Left lung (tissue), 14 donors: ENCODE measurements at regions of chr6 and their contacts with region 1.

Region 1: GRCh38 chr6:168884646-168885086 is 369.0 kb downstream of the THBS2 start:
- DNase-seq: peak; percentile 57 to 90 (median 70)
- ATAC-seq: peak; percentile 98
- H3K4me3 ChIP-seq: no peak overlapping the region
- H3K27ac ChIP-seq: no peak overlapping the region
- H3K4me1 ChIP-seq: no peaks in the 10 kb centered on the region
- H3K27me3 ChIP-seq: peaks cover 0 to 57% of the 10 kb centered on the region in 2 donors
- CTCF ChIP-seq: peak; percentile 89 to 91

Region 2: DNA sequence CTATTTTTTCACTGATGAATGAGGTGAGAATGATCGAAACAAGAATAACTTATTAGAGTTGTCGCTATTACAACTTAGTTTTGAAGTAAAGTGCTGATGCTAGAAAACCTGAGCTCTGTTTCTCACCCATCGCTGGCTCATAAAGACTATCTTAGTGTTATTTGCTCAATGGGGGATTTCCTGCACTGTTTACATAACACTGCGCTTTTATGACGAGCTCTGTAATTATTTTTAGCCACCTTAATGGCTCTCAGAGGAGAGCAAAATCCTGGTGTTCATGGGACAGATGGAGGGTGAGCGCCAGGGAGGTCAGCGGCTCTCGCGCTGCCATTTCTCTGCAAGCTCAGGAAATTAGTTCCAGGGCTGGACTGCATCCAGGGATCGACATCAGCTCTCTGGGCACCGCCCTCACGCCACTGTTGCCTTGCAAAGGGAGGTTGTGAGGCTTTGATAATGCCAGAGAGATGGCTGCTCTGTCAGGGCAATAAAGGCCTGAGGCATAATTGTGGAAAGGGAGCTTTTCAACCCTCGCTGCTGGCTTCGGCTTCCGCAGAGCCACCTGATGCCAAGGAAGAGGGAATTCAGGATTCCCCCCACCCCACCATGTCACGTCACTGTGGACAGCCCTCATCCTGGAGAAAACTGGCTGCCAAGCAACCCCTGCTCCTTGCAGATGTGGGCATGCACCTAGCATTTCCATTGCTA is 637.1 kb before region 1 on chr6:
- intact Hi-C with region 1: no loop called
- DNase-seq: peak in 1 of 4 donors; percentile 74
- ATAC-seq: peak; percentile 85
- H3K4me3 ChIP-seq: no peak overlapping the region
- H3K27ac ChIP-seq: no peak overlapping the region
- H3K4me1 ChIP-seq: peaks cover 0 to 6% of the 10 kb centered on the region in 2 donors
- H3K27me3 ChIP-seq: no peaks in the 10 kb centered on the region
- CTCF ChIP-seq: no peak

Region 3: GRCh38 chr6:168370310-168370991 is 514.2 kb before region 1 on chr6:
- intact Hi-C with region 1: loop called in 1 of 2 experiments (anchors 5 kb)
- DNase-seq: peak; percentile 43 to 88 (median 62)
- ATAC-seq: peak; percentile 96
- H3K4me3 ChIP-seq: no peak overlapping the region
- H3K27ac ChIP-seq: no peak overlapping the region
- H3K4me1 ChIP-seq: no peaks in the 10 kb centered on the region
- H3K27me3 ChIP-seq: peaks cover 0 to 40% of the 10 kb centered on the region in 2 donors
- CTCF ChIP-seq: peak; percentile 65 to 71

Region 4: GRCh38 chr6:168616816-168617765 is 267.6 kb before region 1 on chr6:
- intact Hi-C with region 1: loop called in 1 of 2 experiments (anchors 5 kb)
- DNase-seq: no peak
- ATAC-seq: peak; percentile 54
- H3K4me3 ChIP-seq: no peak overlapping the region
- H3K27ac ChIP-seq: no peak overlapping the region
- H3K4me1 ChIP-seq: no peaks in the 10 kb centered on the region
- H3K27me3 ChIP-seq: no peaks in the 10 kb centered on the region
- CTCF ChIP-seq: no peak